ENCODE measurements at regions of chr3 and their contacts with region 1.

Region 1: DNA sequence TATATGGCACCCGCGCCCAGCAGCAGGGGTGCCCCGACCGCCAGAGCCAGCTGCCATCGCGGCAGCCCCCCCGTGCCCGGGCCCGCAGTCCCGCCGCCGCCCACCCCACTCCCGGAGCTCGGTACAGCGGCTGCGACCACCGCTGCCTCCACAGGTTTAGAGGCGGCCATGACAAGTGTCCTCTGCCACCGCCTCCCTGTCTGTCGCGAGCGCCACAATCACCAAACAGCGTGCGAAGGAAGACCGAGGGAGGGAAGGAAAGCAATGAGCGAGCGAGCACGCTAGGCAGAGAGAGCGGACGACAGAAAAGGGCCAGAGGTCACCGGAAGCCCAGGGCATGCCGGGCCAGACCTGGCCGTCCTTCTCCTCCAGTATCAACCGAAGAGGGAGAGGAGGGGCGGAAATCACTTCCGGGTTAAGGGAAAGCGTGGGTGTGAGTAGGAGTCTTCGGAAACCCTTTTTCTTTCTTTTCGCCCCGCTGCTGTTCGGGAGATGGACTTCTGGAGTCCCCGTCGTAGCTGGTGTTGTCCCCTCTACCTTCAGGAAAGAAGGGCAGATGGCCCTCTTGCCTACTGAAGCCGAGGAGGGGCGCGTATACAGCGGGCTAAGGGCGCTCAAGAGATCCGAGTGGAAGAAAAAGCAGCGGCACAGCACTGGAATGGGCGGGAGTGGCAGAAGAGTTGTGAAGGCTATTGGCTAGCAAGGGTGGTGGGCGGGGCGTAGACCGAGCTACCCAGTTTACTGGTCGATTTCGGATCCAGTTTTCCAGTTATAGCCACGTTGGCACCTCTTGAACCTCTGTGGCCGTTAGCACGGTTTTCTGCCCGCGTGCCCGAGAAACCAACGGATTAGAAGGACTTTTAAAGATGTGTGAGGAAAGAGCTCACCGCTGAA is at the starts of genes LNP1 and TOMM70:
- DNase-seq: peak; percentile 95 to 97
- H3K4me3 ChIP-seq: peak within 1 kb of the TSS; percentile 83
- H3K4me3 Mint-ChIP-seq: peak within 1 kb of the TSS; percentile 85
- H3K27ac Mint-ChIP-seq: peak within 1 kb of the TSS; percentile 90
- H3K4me1 ChIP-seq: peaks cover 5% of the 10 kb centered on the region
- H3K4me1 Mint-ChIP-seq: no peaks in the 10 kb centered on the region
- H3K27me3 ChIP-seq: no peaks in the 10 kb centered on the region
- H3K27me3 Mint-ChIP-seq: no peaks in the 10 kb centered on the region
- CTCF ChIP-seq: no peak
- total RNA-seq, gene LNP1: 2.4 and 3.3 TPM in 2 replicates
- total RNA-seq, gene TOMM70: 50.7 and 53.3 TPM in 2 replicates

Region 2: GRCh38 chr3:99817437-99818240 is 583.4 kb before region 1 on chr3 and contains the start of gene CMSS1:
- CTCF ChIA-PET with region 1: no interaction called
- POLR2A ChIA-PET with region 1: no interaction called
- intact Hi-C with region 1: loop called (anchors 5 kb)
- DNase-seq: peak; percentile 92 to 95
- H3K4me3 ChIP-seq: peak within 1 kb of the TSS; percentile 68
- H3K4me3 Mint-ChIP-seq: peak within 1 kb of the TSS; percentile 97
- H3K27ac Mint-ChIP-seq: peak within 1 kb of the TSS; percentile 99
- H3K4me1 ChIP-seq: no peaks in the 10 kb centered on the region; the same call in 1 of the 2 replicates
- H3K4me1 Mint-ChIP-seq: no peaks in the 10 kb centered on the region
- H3K27me3 ChIP-seq: no peaks in the 10 kb centered on the region
- H3K27me3 Mint-ChIP-seq: no peaks in the 10 kb centered on the region
- CTCF ChIP-seq: peak in 1 of 2 experiments; percentile 28
- total RNA-seq, gene CMSS1: 36.3 and 54.4 TPM in 2 replicates

Region 3: DNA sequence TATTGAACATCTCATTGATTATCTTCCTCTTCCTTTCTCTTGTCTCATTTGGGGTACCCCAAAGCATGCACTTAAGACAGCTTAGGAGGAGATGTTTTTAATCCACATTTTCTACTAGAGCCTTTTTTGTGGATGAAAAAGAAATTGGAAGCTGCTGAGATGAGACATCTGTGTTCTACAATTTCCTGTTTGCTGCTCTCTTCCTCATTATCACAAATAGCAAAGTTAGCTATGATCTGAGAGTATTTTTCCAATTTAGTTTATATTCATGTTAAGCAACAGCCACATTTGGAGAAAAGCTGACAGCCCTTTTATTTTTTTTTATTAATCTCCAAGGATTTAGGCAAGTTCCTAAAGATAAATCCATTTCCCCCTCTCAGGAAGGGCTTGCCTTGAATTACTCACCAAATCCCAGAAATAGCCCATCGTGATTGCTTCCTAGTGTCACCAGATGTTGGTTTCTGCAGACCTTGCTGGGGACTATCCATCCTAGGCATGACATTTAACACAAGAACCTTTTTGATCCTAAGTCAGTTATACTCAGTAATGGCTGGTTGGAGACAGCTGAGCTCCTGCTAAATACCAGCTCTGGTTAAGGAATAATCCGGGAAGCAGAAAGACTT is 216.0 kb before region 1 on chr3:
- CTCF ChIA-PET with region 1: no interaction called
- POLR2A ChIA-PET with region 1: no interaction called
- intact Hi-C with region 1: no loop called
- DNase-seq: no peak
- H3K4me3 ChIP-seq: no peak overlapping the region
- H3K4me3 Mint-ChIP-seq: no peak overlapping the region
- H3K27ac Mint-ChIP-seq: no peak overlapping the region
- H3K4me1 ChIP-seq: no peaks in the 10 kb centered on the region
- H3K4me1 Mint-ChIP-seq: no peaks in the 10 kb centered on the region
- H3K27me3 ChIP-seq: no peaks in the 10 kb centered on the region
- H3K27me3 Mint-ChIP-seq: no peaks in the 10 kb centered on the region
- CTCF ChIP-seq: no peak

Region 4: GRCh38 chr3:100316641-100317069 is 84.4 kb before region 1 on chr3:
- CTCF ChIA-PET with region 1: no interaction called
- POLR2A ChIA-PET with region 1: no interaction called
- intact Hi-C with region 1: loop called (anchors 5 kb)
- DNase-seq: peak; percentile 39 to 59
- H3K4me3 ChIP-seq: no peak overlapping the region
- H3K4me3 Mint-ChIP-seq: no peak overlapping the region
- H3K27ac Mint-ChIP-seq: no peak overlapping the region
- H3K4me1 ChIP-seq: no peaks in the 10 kb centered on the region
- H3K4me1 Mint-ChIP-seq: no peaks in the 10 kb centered on the region
- H3K27me3 ChIP-seq: no peaks in the 10 kb centered on the region
- H3K27me3 Mint-ChIP-seq: no peaks in the 10 kb centered on the region
- CTCF ChIP-seq: peak; percentile 59 to 64

Region 5: GRCh38 chr3:100334488-100335351 is 66.3 kb before region 1 on chr3 and contains the start of gene NIT2:
- CTCF ChIA-PET with region 1: interaction called, 10 read pairs
- POLR2A ChIA-PET with region 1: interaction called, 7 read pairs
- intact Hi-C with region 1: loop called (anchors 2 kb)
- DNase-seq: peak; percentile 89 to 90
- H3K4me3 ChIP-seq: peak within 1 kb of the TSS; percentile 90
- H3K4me3 Mint-ChIP-seq: peak within 1 kb of the TSS; percentile 85
- H3K27ac Mint-ChIP-seq: peak within 1 kb of the TSS; percentile 89
- H3K4me1 ChIP-seq: peaks cover 19% of the 10 kb centered on the region
- H3K4me1 Mint-ChIP-seq: peaks cover 22% of the 10 kb centered on the region
- H3K27me3 ChIP-seq: no peaks in the 10 kb centered on the region
- H3K27me3 Mint-ChIP-seq: no peaks in the 10 kb centered on the region
- CTCF ChIP-seq: peak in 1 of 2 experiments; percentile 9
- total RNA-seq, gene NIT2: 59.7 and 64.1 TPM in 2 replicates

Region 6: DNA sequence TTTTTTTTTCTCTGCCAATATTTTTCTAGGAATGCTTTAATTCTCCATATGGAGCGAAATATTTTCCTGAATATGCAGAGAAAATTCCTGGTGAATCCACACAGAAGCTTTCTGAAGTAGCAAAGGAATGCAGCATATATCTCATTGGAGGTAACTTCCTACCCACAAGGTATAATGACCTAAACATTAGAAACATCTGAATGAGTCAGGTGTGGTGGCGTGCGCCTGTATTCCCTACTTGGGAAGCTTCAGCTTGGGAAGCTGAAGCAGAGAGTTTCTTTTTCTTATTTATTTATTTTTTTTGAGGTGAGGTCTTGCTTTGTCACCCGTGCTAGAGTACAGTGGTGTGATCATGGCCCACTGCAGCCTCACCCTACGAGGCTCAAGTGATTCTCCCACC is 61.2 kb before region 1 on chr3:
- CTCF ChIA-PET with region 1: interaction called, 10 read pairs
- POLR2A ChIA-PET with region 1: interaction called, 7 read pairs
- intact Hi-C with region 1: loop called (anchors 2 kb)
- DNase-seq: no peak
- H3K4me3 ChIP-seq: no peak overlapping the region
- H3K4me3 Mint-ChIP-seq: no peak overlapping the region
- H3K27ac Mint-ChIP-seq: no peak overlapping the region
- H3K4me1 ChIP-seq: peaks cover 10% of the 10 kb centered on the region; the same call in 1 of the 2 replicates
- H3K4me1 Mint-ChIP-seq: peaks cover 5% of the 10 kb centered on the region
- H3K27me3 ChIP-seq: no peaks in the 10 kb centered on the region
- H3K27me3 Mint-ChIP-seq: no peaks in the 10 kb centered on the region
- CTCF ChIP-seq: no peak

Region 7: GRCh38 chr3:100386437-100387074 is 14.5 kb before region 1 on chr3:
- CTCF ChIA-PET with region 1: no interaction called
- POLR2A ChIA-PET with region 1: interaction called, 28 read pairs
- intact Hi-C with region 1: loop called (anchors 2 kb)
- DNase-seq: peak in 1 of 2 experiments; percentile 37
- H3K4me3 ChIP-seq: no peak overlapping the region
- H3K4me3 Mint-ChIP-seq: no peak overlapping the region
- H3K27ac Mint-ChIP-seq: peak overlapping the region; percentile 81
- H3K4me1 ChIP-seq: peaks cover 16% of the 10 kb centered on the region
- H3K4me1 Mint-ChIP-seq: peaks cover 7% of the 10 kb centered on the region
- H3K27me3 ChIP-seq: no peaks in the 10 kb centered on the region
- H3K27me3 Mint-ChIP-seq: no peaks in the 10 kb centered on the region
- CTCF ChIP-seq: no peak

Region 8: DNA sequence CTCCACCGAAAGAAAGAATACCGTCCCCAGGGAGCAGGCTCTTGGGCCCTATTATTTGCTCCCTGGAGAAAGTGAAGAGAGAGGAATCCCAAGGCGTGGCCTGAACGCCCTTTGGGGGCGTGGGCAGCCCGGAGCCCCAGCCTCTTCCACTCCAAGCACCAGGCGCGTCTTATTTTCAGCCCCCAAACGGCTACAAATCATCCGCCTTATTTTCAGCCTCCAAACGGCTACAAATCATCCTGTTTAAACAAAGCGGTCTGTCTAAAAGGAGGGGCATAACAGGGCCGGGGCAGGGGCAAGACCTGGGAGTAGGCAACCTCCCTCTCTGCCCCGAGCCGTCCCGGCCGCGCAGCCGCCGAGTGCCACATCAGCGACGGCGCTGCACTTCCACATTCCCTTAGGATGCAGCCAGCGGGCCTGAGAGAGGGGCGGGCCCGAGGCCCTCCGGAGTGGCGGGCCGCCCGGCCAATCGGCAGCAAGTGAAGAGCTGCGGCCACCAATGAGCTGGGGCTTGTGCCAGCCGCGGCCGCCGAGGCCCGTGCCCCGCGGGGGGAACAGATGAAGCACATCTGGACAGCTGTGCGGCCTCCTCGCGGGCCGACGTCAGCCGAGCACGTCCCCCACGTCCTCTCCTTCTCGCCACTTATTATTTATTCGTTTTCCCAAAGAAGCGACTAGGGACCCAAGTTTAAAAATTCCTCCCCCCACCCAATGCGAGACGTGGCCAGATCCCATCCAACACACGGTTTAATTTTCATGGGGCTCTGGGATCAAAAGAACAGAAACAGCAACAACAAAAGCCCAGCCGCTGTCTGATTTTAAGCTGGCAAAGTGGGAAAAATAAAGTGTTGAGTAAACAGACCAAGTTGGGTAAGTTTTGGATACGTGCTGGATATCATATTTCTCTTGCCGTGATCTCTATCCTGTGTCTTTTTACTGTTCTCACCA is 91.3 kb after region 1 on chr3 and contains the start of gene TMEM45A:
- CTCF ChIA-PET with region 1: no interaction called
- POLR2A ChIA-PET with region 1: interaction called, 3 read pairs
- intact Hi-C with region 1: loop called (anchors 1 kb)
- DNase-seq: peak; percentile 94 to 97
- H3K4me3 ChIP-seq: peak within 1 kb of the TSS; percentile 62
- H3K4me3 Mint-ChIP-seq: peak within 1 kb of the TSS; percentile 73
- H3K27ac Mint-ChIP-seq: peak within 1 kb of the TSS; percentile 22
- H3K4me1 ChIP-seq: peaks cover 4% of the 10 kb centered on the region
- H3K4me1 Mint-ChIP-seq: peaks cover 19% of the 10 kb centered on the region
- H3K27me3 ChIP-seq: no peaks in the 10 kb centered on the region
- H3K27me3 Mint-ChIP-seq: no peaks in the 10 kb centered on the region
- CTCF ChIP-seq: no peak
- total RNA-seq, gene TMEM45A: 4.3 and 5.6 TPM in 2 replicates

Region 9: DNA sequence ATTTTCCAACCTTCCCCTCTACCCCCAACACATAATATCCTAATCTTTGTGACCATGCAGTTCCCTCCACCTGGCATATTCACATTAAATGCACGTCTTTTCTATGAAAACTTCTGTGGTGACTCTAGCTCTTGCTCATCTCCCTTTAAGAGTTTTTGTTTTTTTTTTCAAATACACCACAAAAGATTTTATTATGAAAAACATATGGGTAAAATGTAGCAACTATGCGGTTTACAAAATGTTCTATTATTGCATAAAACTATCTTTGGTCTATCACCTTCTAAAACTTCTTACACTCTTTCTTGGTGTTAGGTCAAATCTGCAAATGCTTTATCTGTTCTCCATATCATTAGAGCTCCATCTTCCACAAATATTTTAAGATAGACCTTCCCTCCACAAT is 169.8 kb after region 1 on chr3:
- CTCF ChIA-PET with region 1: no interaction called
- POLR2A ChIA-PET with region 1: no interaction called
- intact Hi-C with region 1: no loop called
- DNase-seq: no peak
- H3K4me3 ChIP-seq: no peak overlapping the region
- H3K4me3 Mint-ChIP-seq: no peak overlapping the region
- H3K27ac Mint-ChIP-seq: no peak overlapping the region
- H3K4me1 ChIP-seq: no peaks in the 10 kb centered on the region
- H3K4me1 Mint-ChIP-seq: no peaks in the 10 kb centered on the region
- H3K27me3 ChIP-seq: no peaks in the 10 kb centered on the region
- H3K27me3 Mint-ChIP-seq: no peaks in the 10 kb centered on the region
- CTCF ChIP-seq: no peak

Measured in Caco-2 (cell line).